Psoas muscle (tissue), 8 donors: ENCODE measurements at regions of chr5 and their contacts with region 1.

Region 1: DNA sequence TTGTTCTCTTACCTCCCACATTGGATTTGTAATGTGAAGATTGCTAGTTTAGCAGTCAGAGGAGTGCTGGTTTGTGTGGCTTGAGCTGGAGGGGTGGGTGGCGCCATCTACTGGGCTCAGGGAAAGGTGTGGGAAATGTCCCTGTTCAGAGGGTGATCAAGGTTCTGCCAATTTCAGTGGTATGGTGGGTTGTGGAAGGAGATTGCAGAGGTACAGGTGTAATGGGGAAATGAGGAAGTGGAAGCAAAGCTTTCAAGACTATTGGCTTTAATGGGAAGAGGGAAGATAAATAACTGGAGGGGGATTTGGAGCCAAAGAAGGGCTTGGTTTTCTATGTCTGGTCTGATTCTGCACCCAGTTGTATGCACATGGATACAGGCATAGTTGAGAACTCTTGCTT is 76.4 kb downstream of the OSMR start:
- DNase-seq: peak in 1 of 2 donors; percentile 39
- ATAC-seq: peak; percentile 61 to 74 (median 71)
- H3K4me3 ChIP-seq: no peak overlapping the region
- H3K27ac ChIP-seq: no peak overlapping the region
- H3K4me1 ChIP-seq: no peaks in the 10 kb centered on the region
- H3K27me3 ChIP-seq: no peaks in the 10 kb centered on the region
- CTCF ChIP-seq: peak; percentile 68

Region 2: DNA sequence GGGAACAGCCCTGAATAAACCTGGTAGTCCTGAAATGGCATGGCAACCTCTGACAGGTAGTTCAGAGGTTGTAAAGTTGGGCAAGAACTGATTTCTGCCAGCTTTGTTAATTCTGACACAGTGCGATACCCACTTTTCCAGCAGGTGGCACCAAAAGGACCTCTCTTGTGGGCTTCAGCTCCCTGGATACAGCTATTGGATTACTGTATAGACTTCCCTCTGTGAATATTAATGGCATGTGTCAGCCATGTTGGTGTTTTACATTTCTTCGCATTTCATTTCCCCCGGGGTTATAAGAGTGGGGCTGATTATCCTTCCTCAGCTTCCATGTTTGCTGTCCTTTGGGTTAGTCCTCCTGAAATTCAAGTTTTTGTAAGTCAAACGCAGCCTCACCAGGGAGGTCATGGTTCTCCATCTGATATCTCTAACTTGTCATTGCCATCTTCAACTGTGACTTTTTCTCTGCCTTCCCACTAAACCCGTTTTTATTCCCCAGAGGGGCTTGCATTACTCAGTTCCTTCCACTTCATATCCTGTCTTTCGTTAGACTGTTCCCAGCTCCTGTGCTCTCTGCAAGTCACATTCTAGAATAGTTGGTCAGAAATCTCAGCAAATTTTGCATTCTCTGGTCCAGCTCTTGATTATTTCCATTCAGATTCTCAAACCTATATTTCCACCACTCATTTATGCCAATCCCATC is 501.4 kb before region 1 on chr5:
- intact Hi-C with region 1: loop called in 1 of 2 experiments (anchors 10 kb)
- DNase-seq: peak in 1 of 2 donors; percentile 35
- ATAC-seq: peak; percentile 83 to 92 (median 88)
- H3K4me3 ChIP-seq: no peak overlapping the region
- H3K27ac ChIP-seq: no peak overlapping the region
- H3K4me1 ChIP-seq: no peaks in the 10 kb centered on the region
- H3K27me3 ChIP-seq: no peaks in the 10 kb centered on the region
- CTCF ChIP-seq: peak; percentile 70

Region 3: DNA sequence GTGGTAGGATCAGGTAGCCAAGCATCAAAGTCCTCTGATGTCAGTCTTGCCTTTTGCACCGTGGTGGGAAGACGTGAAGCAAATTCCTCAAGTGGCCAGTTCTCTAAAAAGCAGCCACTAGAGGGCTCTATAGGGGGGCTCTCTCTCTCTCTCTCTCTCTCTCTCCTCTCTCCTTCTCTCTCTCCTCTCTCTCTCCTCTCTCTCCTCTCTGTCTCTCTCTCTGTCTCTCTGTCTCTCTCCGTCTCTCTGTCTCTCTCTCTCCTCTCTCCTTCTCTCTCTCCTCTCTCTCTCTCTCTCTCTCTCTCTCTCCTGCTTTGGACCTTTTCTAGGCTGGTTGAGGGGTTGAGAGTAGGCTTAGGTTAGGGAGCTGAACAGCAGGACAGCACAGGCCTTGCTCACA is 90.3 kb before region 1 on chr5:
- intact Hi-C with region 1: loop called (anchors 5 to 10 kb)
- DNase-seq: no peak
- ATAC-seq: peak in 2 of 4 donors; percentile 60 to 71
- H3K4me3 ChIP-seq: no peak overlapping the region
- H3K27ac ChIP-seq: no peak overlapping the region
- H3K4me1 ChIP-seq: no peaks in the 10 kb centered on the region
- H3K27me3 ChIP-seq: no peaks in the 10 kb centered on the region
- CTCF ChIP-seq: peak; percentile 32

Region 4: DNA sequence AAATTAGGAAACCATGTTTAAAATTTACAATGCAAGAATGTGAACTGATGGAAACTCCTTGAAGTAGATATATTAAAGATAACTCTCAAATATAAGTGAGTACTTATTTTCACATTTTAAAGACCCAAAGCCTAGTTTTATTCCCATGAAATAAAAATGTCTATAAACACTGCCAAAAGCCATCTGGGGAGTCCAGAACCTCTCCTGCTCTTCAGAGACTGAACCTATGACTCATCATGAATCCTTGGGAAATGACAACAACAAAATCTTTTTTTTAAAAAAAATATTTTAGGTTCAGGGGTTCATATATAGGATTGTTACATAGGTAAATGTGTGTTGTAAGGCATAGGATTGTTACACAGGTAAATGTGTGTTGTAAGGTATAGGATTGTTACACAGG is 331.0 kb after region 1 on chr5:
- intact Hi-C with region 1: no loop called
- DNase-seq: no peak
- ATAC-seq: no peak
- H3K4me3 ChIP-seq: no peak overlapping the region
- H3K27ac ChIP-seq: no peak overlapping the region
- H3K4me1 ChIP-seq: peaks cover 5% of the 10 kb centered on the region
- H3K27me3 ChIP-seq: peaks cover 0 to 2% (median 0%) of the 10 kb centered on the region in 3 donors
- CTCF ChIP-seq: no peak